H1 (cell line): ENCODE measurements at regions of chr1 and their contacts with region 1.

Region 1: GRCh38 chr1:35202048-35202719 is 9.2 kb upstream of the SFPQ start:
- DNase-seq: peak; percentile 46 to 75
- H3K4me3 ChIP-seq: peak overlapping the region in 1 of 4 experiments; percentile 30; a peak in 1 of 8 replicates
- H3K27ac ChIP-seq: no peak overlapping the region
- H3K4me1 ChIP-seq: no peaks in the 10 kb centered on the region
- H3K27me3 ChIP-seq: no peaks in the 10 kb centered on the region
- CTCF ChIP-seq: peak; percentile 67 to 96 (median 81)
- EP300 ChIP-seq: 0 out of 3 replicates have a peak, but pooled peaks of 1 of the 2 experiments have one; percentile 4
- POLR2A ChIP-seq: no peak
- RAD21 ChIP-seq: peak; percentile 82 to 85

Region 2: DNA sequence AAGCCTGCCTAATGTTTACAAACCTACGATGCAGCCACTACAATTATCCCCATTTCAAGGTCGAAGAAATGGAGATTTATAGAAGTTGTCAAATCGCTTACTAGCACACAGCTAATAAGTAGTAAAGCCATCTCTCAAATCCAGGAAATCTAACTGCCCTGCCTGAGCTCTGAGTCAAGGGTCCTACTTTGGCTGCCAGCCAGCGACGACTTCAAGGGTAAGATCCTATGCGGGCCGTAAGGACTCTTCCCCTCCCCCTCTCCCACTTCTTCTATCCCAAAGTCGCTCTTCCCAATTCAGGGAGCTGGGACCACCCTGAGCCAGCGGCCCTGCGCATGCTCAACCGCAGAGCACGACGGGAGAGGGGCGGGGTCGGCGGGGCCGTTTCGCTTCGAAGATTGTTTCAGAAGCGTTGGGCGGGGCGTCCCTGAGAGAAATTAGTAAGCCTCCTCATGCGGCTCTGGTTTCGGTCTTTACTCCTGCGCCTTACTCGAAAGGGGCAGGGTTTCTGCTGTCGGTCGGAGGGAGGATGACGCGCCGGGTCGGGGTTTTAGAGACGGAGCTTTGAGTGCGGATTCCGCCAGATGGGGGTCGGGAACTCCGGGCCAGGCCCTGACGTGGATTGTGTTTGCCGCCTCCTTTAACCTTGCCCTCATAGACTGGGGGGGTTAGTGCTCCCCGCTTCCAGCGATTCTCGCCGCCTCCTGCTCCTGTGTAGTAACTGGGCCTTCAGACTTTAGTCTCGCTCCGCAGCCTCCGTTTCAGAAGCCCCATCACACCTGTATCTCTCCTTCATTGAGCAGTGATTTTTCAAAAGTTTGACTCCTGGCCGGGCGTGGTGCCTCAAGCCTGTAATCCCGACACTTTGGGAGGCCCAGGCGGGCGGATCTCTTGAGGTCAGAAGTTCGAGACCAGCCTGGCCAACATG is 122.9 kb before region 1 on chr1 and contains the start of gene ZMYM1:
- CTCF ChIA-PET with region 1: no interaction called
- POLR2A ChIA-PET with region 1: no interaction called
- DNase-seq: peak; percentile 77 to 93
- H3K4me3 ChIP-seq: peak within 1 kb of the TSS; percentile 72 to 96 (median 82)
- H3K27ac ChIP-seq: peak within 1 kb of the TSS; percentile 73
- H3K4me1 ChIP-seq: peaks cover 2 to 10% (median 6%) of the 10 kb centered on the region in 4 experiments; a peak in 5 of 7 replicates
- H3K27me3 ChIP-seq: no peaks in the 10 kb centered on the region
- CTCF ChIP-seq: no peak
- EP300 ChIP-seq: no peak
- POLR2A ChIP-seq: peak; percentile 32 to 71
- RAD21 ChIP-seq: no peak; a peak in 1 of 4 replicates
- total RNA-seq, gene ZMYM1: 39.6 and 41.3 TPM in 2 replicates

Region 3: GRCh38 chr1:35190784-35191183 is 11.4 kb before region 1 on chr1:
- CTCF ChIA-PET with region 1: interaction called, 4 read pairs
- POLR2A ChIA-PET with region 1: interaction called, 14 read pairs
- DNase-seq: no peak
- H3K4me3 ChIP-seq: peak overlapping the region; percentile 92 to 99 (median 97)
- H3K27ac ChIP-seq: no peak overlapping the region
- H3K4me1 ChIP-seq: peaks cover 6 to 10% (median 8%) of the 10 kb centered on the region in 4 experiments; a peak in 6 of 7 replicates
- H3K27me3 ChIP-seq: no peaks in the 10 kb centered on the region
- CTCF ChIP-seq: no peak
- EP300 ChIP-seq: no peak
- POLR2A ChIP-seq: no peak; a peak in 1 of 3 replicates
- RAD21 ChIP-seq: no peak

Region 4: GRCh38 chr1:35220976-35221375 is 18.8 kb after region 1 on chr1:
- CTCF ChIA-PET with region 1: interaction called, 11 read pairs
- POLR2A ChIA-PET with region 1: interaction called, 5 read pairs
- DNase-seq: no peak
- H3K4me3 ChIP-seq: no peak overlapping the region
- H3K27ac ChIP-seq: no peak overlapping the region
- H3K4me1 ChIP-seq: no peaks in the 10 kb centered on the region; a peak in 2 of 7 replicates
- H3K27me3 ChIP-seq: no peaks in the 10 kb centered on the region
- CTCF ChIP-seq: peak; percentile 19 to 69 (median 35); a peak in 3 of 4 replicates
- EP300 ChIP-seq: no peak
- POLR2A ChIP-seq: no peak
- RAD21 ChIP-seq: no peak

Region 5: DNA sequence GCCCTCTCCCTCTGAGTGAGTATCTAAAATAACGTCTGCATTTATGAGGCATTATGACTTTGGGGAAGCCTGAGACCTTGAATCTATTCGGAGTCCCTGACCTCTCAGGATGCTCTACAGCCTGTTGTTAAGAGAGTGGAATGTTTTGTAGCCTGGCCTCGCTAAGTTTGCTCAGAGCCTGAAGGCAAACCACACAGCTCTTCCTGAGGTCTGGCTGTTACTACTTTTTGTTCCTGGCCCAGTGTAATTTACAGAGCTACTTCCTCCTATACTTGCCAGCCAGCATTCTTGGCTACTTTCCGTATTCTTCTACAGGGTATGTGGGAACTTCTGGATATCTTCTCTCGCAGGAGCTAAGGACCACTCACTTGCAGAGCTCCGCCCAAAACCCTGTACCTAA is 62.7 kb after region 1 on chr1:
- CTCF ChIA-PET with region 1: interaction called, 14 read pairs
- POLR2A ChIA-PET with region 1: interaction called, 3 read pairs
- DNase-seq: no peak
- H3K4me3 ChIP-seq: no peak overlapping the region
- H3K27ac ChIP-seq: no peak overlapping the region
- H3K4me1 ChIP-seq: peaks cover 0 to 3% (median 1%) of the 10 kb centered on the region in 4 experiments; a peak in 3 of 7 replicates
- H3K27me3 ChIP-seq: no peaks in the 10 kb centered on the region
- CTCF ChIP-seq: no peak
- EP300 ChIP-seq: no peak
- POLR2A ChIP-seq: no peak
- RAD21 ChIP-seq: no peak

Region 6: GRCh38 chr1:35298464-35298863 is 96.3 kb after region 1 on chr1:
- CTCF ChIA-PET with region 1: interaction called, 12 read pairs
- POLR2A ChIA-PET with region 1: interaction called, 6 read pairs
- DNase-seq: no peak
- H3K4me3 ChIP-seq: no peak overlapping the region
- H3K27ac ChIP-seq: no peak overlapping the region
- H3K4me1 ChIP-seq: peaks cover 0 to 4% (median 0%) of the 10 kb centered on the region in 4 experiments; a peak in 1 of 7 replicates
- H3K27me3 ChIP-seq: no peaks in the 10 kb centered on the region
- CTCF ChIP-seq: peak in 2 of 3 experiments; percentile 51 to 75; a peak in 2 of 4 replicates
- EP300 ChIP-seq: no peak
- POLR2A ChIP-seq: no peak
- RAD21 ChIP-seq: peak; percentile 77 to 85

Region 7: GRCh38 chr1:35753626-35754260 is 551.6 kb after region 1 on chr1:
- CTCF ChIA-PET with region 1: no interaction called
- POLR2A ChIA-PET with region 1: no interaction called
- DNase-seq: no peak
- H3K4me3 ChIP-seq: no peak overlapping the region
- H3K27ac ChIP-seq: no peak overlapping the region
- H3K4me1 ChIP-seq: no peaks in the 10 kb centered on the region
- H3K27me3 ChIP-seq: no peaks in the 10 kb centered on the region
- CTCF ChIP-seq: no peak
- EP300 ChIP-seq: no peak
- POLR2A ChIP-seq: no peak
- RAD21 ChIP-seq: no peak